Gastrocnemius medialis (tissue), 4 donors: ENCODE measurements at regions of chr17 and their contacts with region 1.

Region 1: DNA sequence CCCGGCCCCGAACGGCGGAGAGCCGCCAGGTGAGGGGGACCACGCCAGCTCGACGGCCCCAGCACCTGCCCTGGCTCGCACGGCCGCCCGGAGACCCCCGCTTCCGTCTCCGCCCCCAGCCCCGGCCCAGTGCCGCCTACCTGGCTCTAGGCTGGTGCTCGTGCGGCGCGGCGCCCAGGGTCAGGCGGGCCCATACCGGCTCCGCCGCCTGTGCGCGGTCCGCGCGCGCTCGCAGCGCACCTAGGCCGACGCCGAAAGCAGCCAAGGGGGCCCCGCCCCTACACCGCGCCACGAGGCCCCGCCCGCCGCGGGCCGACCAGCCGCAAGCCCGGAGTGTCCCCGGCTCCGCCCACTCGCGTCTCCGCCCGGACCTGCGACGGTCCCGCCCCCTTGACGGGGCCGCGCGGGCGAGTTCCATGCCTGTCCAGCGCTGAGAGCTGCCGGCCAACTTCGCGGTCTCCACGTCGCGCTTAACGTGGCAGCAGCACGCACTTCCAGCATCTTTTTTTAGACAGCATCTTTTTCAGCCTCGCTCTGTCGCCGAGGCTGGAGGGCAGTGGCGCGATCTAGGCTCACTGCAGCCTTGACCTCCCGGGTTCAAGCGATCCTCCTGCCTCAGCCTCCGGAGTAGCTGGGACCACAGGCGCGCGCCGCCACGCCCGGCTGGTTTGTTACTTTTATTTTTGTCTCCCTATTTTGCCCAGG is at the start of gene SLC25A39:
- DNase-seq: peak; percentile 89 to 92
- ATAC-seq: peak; percentile 79 to 83
- H3K4me3 ChIP-seq: peak within 1 kb of the TSS; percentile 87 to 98 (median 94)
- H3K27ac ChIP-seq: peak within 1 kb of the TSS; percentile 86 to 99 (median 94)
- H3K4me1 ChIP-seq: peaks cover 16 to 22% of the 10 kb centered on the region in 2 donors
- H3K27me3 ChIP-seq: no peaks in the 10 kb centered on the region
- CTCF ChIP-seq: peak in 1 of 5 experiments; percentile 40
- POLR2A ChIP-seq: peak; percentile 81 to 86
- total RNA-seq, gene SLC25A39: 36.7 to 44.2 (median 38.4) TPM

Region 2: GRCh38 chr17:44123356-44124117 is 201.2 kb before region 1 on chr17 and contains the start of gene HDAC5:
- in situ Hi-C with region 1: no loop called
- intact Hi-C with region 1: loop called (anchors 5 kb)
- DNase-seq: peak; percentile 94 to 96
- ATAC-seq: peak; percentile 93 to 94
- H3K4me3 ChIP-seq: peak within 1 kb of the TSS; percentile 81 to 97 (median 89)
- H3K27ac ChIP-seq: peak within 1 kb of the TSS; percentile 93 to 99 (median 96)
- H3K4me1 ChIP-seq: peaks cover 42 to 48% of the 10 kb centered on the region in 2 donors
- H3K27me3 ChIP-seq: no peaks in the 10 kb centered on the region
- CTCF ChIP-seq: peak; percentile 59 to 78 (median 75)
- POLR2A ChIP-seq: peak; percentile 92 to 97
- total RNA-seq, gene HDAC5: 36.5 to 301 (median 88.0) TPM

Region 3: GRCh38 chr17:44141717-44142285 is 182.9 kb before region 1 on chr17 and contains the start of gene HROB:
- in situ Hi-C with region 1: loop called in 1 of 4 experiments (anchors 10 kb)
- intact Hi-C with region 1: loop called (anchors 2 kb)
- DNase-seq: peak; percentile 92 to 94
- ATAC-seq: peak; percentile 90
- H3K4me3 ChIP-seq: peak within 1 kb of the TSS; percentile 67 to 87 (median 73)
- H3K27ac ChIP-seq: peak within 1 kb of the TSS; percentile 28 to 64 (median 46)
- H3K4me1 ChIP-seq: peaks cover 26 to 31% of the 10 kb centered on the region in 2 donors
- H3K27me3 ChIP-seq: no peaks in the 10 kb centered on the region
- CTCF ChIP-seq: peak; percentile 85 to 94 (median 89)
- POLR2A ChIP-seq: no peak
- total RNA-seq, gene HROB: 0.97 to 7.4 (median 1.9) TPM

Region 4: DNA sequence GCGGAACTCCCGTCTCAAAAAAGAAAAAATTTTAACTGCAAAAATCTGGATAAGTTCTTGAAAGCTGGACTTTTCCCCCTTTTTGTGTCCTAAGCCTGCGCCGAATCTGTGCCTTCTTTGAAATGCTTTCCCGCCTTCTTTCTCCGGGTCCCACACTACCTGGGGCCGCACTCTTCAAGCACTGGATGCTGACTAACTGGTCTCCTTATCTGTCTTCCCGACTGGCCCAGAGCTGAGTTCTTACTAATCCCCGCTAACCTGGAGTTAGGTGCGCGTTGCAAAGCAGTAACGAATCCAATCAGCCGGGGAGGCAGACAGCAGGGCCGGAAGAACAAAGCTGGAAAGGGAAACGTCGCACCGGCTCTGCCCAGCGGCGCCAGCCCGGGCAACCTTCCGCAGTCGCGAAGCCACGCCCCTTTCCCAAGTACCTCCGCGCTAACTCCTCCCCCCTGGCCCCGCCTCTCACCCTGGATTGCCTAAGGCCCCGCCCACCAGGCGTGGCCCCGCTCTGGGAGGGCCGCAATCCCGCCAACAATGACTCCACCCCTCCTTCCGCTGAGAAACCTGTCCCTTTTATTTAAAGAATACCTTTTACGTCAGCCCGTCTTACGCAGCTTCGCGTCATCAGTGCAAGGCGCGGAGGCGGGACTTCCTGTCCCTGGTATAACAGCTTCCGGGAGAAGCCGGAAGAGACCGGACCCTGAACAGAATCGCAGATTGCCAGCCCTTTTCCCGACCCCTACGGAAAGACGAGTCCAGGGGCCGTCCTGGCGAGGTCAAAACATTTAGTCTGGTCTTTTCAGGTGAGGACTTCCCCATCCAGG is 138.2 kb before region 1 on chr17 and contains the start of gene TMUB2:
- in situ Hi-C with region 1: no loop called
- intact Hi-C with region 1: loop called (anchors 1 kb)
- DNase-seq: peak; percentile 98 to 99
- ATAC-seq: peak; percentile 93 to 97
- H3K4me3 ChIP-seq: peak within 1 kb of the TSS; percentile 88 to 99 (median 90)
- H3K27ac ChIP-seq: peak within 1 kb of the TSS; percentile 93 to 99 (median 96)
- H3K4me1 ChIP-seq: peaks cover 27 to 40% of the 10 kb centered on the region in 2 donors
- H3K27me3 ChIP-seq: no peaks in the 10 kb centered on the region
- CTCF ChIP-seq: no peak
- POLR2A ChIP-seq: peak; percentile 74 to 77
- total RNA-seq, gene TMUB2: 25.6 to 34.7 (median 27.4) TPM

Region 5: GRCh38 chr17:44199553-44200477 is 124.9 kb before region 1 on chr17 and contains the start of gene ATXN7L3:
- in situ Hi-C with region 1: loop called in 1 of 4 experiments (anchors 5 kb)
- intact Hi-C with region 1: no loop called
- DNase-seq: peak; percentile 99
- ATAC-seq: peak; percentile 80 to 82
- H3K4me3 ChIP-seq: peak within 1 kb of the TSS; percentile 82 to 96 (median 86)
- H3K27ac ChIP-seq: peak within 1 kb of the TSS; percentile 94 to 98 (median 95)
- H3K4me1 ChIP-seq: peaks cover 9 to 15% of the 10 kb centered on the region in 2 donors
- H3K27me3 ChIP-seq: no peaks in the 10 kb centered on the region
- CTCF ChIP-seq: no peak
- POLR2A ChIP-seq: peak; percentile 59 to 65
- total RNA-seq, gene ATXN7L3: 39.3 to 46.0 (median 40.6) TPM

Region 6: GRCh38 chr17:44218344-44219107 is 106.2 kb before region 1 on chr17:
- in situ Hi-C with region 1: loop called in 1 of 4 experiments (anchors 5 kb)
- intact Hi-C with region 1: loop called (anchors 1 kb)
- DNase-seq: peak; percentile 84 to 87
- ATAC-seq: peak; percentile 45 to 59
- H3K4me3 ChIP-seq: peak overlapping the region; percentile 51 to 93 (median 63)
- H3K27ac ChIP-seq: peak overlapping the region; percentile 95 to 100 (median 98)
- H3K4me1 ChIP-seq: peaks cover 46 to 55% of the 10 kb centered on the region in 2 donors
- H3K27me3 ChIP-seq: no peaks in the 10 kb centered on the region
- CTCF ChIP-seq: peak; percentile 35 to 72 (median 62)
- POLR2A ChIP-seq: peak; percentile 70 to 81

Region 7: GRCh38 chr17:44344939-44345453 is 20.3 kb after region 1 on chr17 and contains the start of gene GRN:
- in situ Hi-C with region 1: no loop called
- intact Hi-C with region 1: loop called (anchors 2 kb)
- DNase-seq: peak; percentile 94 to 95
- ATAC-seq: peak; percentile 99 to 100
- H3K4me3 ChIP-seq: peak within 1 kb of the TSS; percentile 73 to 87 (median 78)
- H3K27ac ChIP-seq: peak within 1 kb of the TSS; percentile 83 to 93 (median 84)
- H3K4me1 ChIP-seq: peaks cover 7 to 8% of the 10 kb centered on the region in 2 donors
- H3K27me3 ChIP-seq: no peaks in the 10 kb centered on the region
- CTCF ChIP-seq: no peak
- POLR2A ChIP-seq: peak; percentile 67 to 84
- total RNA-seq, gene GRN: 64.2 to 111 (median 87.1) TPM

Region 8: DNA sequence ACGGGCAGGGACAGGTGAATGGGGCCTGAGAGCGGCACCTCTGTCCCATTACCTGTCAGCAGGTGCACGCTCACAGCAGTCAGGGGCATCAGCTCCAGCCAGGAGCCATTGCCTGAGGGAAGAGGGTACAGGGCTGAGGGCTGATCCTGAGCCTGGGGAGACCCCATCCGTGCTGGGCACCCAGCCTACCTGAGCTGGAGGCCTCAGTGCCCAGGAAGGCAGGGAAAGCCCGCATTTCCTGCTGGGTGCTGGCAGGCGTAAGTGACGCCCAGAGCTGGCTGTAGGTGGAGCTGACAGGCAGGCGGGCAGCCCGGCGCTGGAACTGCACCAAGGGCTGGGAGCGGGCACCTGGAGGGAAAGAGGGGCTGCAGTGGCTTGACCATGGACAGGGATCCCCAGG is 31.5 kb after region 1 on chr17:
- in situ Hi-C with region 1: no loop called
- intact Hi-C with region 1: no loop called
- DNase-seq: no peak
- ATAC-seq: no peak
- H3K4me3 ChIP-seq: no peak overlapping the region
- H3K27ac ChIP-seq: no peak overlapping the region
- H3K4me1 ChIP-seq: no peaks in the 10 kb centered on the region
- H3K27me3 ChIP-seq: no peaks in the 10 kb centered on the region
- CTCF ChIP-seq: no peak
- POLR2A ChIP-seq: no peak